Activated CD4-positive, alpha-beta memory T cell treated with anti-CD3 and anti-CD28 coated beads, Interleukin-2, amount 10 ng/mL, durations not matched to agents 7 days and 5 days (primary cell): ENCODE measurements at regions of chr4 and their contacts with region 1.

Region 1: GRCh38 chr4:86895692-86896488 is 3.7 kb upstream of the C4orf36 start:
- DNase-seq: no peak
- H3K4me3 Mint-ChIP-seq: no peak overlapping the region
- H3K27ac Mint-ChIP-seq: no peak overlapping the region
- H3K4me1 Mint-ChIP-seq: peaks cover 12% of the 10 kb centered on the region
- H3K27me3 Mint-ChIP-seq: peaks cover 16% of the 10 kb centered on the region

Region 2: GRCh38 chr4:86522349-86522748 is 373.5 kb before region 1 on chr4:
- CTCF ChIA-PET with region 1: interaction called, 12 read pairs
- POLR2A ChIA-PET with region 1: no interaction called
- DNase-seq: no peak
- H3K4me3 Mint-ChIP-seq: no peak overlapping the region
- H3K27ac Mint-ChIP-seq: no peak overlapping the region
- H3K4me1 Mint-ChIP-seq: peaks cover 7% of the 10 kb centered on the region
- H3K27me3 Mint-ChIP-seq: peaks cover 14% of the 10 kb centered on the region

Region 3: DNA sequence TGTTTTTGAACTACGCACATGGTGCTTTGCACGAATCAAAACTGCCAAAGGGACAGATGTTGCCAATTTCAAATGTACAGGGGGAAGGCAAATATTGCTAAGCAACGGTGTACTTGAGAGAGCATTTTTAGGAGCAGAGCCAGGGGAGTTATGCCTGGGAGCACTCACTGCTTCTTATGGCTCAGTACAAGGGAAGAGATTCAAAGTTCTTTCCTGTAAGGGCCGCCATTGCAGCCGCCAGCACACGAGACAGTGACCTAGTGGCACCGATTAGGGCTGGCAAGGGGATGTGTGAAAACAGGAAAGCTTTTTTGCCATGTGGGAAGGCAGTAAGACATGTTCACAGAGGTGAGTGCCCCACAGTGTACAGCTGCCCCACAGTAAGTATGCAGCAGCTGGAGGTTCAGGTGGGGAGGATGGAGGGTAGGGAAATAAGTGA is 172.7 kb after region 1 on chr4:
- CTCF ChIA-PET with region 1: no interaction called
- POLR2A ChIA-PET with region 1: no interaction called
- DNase-seq: no peak
- H3K4me3 Mint-ChIP-seq: no peak overlapping the region
- H3K27ac Mint-ChIP-seq: no peak overlapping the region
- H3K4me1 Mint-ChIP-seq: peaks cover 18% of the 10 kb centered on the region
- H3K27me3 Mint-ChIP-seq: no peaks in the 10 kb centered on the region

Region 4: DNA sequence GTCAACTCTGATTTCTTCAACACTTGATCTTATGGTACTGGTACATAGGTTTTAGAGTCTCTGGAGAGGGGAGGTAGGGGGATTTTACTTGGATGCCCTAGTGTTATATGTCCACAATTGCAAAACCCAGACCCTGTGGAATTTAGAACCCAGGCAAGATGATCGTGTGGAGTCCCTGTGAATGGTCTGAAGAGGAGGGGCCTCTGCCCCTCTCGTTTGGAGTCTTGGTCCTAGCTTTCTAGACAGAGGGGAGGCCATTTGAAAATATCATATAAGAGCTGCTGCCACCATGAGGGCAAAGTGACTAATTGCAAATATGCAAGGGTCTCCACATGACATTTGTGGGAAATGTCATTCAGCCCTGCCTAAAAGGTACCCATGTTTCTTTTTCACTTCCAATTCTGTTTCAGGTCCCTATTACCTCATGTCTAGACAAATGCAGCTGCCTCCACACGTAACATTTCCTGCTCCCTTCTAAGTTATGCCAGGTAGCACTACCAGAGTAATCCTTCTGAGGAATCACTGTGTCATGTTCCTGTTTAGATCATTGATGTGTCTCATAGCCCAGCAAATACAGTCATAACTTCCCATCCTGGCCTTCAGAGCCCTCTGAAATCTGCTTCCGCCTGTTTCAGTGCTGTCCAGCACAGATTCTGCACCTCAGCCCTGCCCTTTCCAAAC is 197.7 kb after region 1 on chr4:
- CTCF ChIA-PET with region 1: no interaction called
- POLR2A ChIA-PET with region 1: no interaction called
- DNase-seq: peak; percentile 29
- H3K4me3 Mint-ChIP-seq: no peak overlapping the region
- H3K27ac Mint-ChIP-seq: no peak overlapping the region
- H3K4me1 Mint-ChIP-seq: peaks cover 18% of the 10 kb centered on the region
- H3K27me3 Mint-ChIP-seq: no peaks in the 10 kb centered on the region

Region 5: DNA sequence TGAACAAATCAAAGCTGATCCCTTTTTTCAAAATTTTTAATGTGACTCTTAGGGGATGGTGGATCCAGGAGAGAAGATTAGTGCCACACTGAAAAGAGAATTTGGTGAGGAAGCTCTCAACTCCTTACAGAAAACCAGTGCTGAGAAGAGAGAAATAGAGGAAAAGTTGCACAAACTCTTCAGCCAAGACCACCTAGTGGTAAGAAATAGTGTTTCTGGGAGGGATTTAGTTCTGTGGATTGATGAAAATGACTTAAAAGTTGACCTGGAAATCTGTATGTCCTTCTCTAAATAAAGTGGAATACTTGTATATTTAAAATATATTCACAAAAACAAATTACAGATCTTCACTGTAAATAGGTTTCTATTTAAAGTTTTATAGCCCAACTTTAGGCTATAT is 555.6 kb after region 1 on chr4:
- CTCF ChIA-PET with region 1: no interaction called
- POLR2A ChIA-PET with region 1: no interaction called
- DNase-seq: no peak
- H3K4me3 Mint-ChIP-seq: no peak overlapping the region
- H3K27ac Mint-ChIP-seq: no peak overlapping the region
- H3K4me1 Mint-ChIP-seq: no peaks in the 10 kb centered on the region
- H3K27me3 Mint-ChIP-seq: no peaks in the 10 kb centered on the region